ENCODE measurements at regions of chr3 and their contacts with region 1.

Region 1: DNA sequence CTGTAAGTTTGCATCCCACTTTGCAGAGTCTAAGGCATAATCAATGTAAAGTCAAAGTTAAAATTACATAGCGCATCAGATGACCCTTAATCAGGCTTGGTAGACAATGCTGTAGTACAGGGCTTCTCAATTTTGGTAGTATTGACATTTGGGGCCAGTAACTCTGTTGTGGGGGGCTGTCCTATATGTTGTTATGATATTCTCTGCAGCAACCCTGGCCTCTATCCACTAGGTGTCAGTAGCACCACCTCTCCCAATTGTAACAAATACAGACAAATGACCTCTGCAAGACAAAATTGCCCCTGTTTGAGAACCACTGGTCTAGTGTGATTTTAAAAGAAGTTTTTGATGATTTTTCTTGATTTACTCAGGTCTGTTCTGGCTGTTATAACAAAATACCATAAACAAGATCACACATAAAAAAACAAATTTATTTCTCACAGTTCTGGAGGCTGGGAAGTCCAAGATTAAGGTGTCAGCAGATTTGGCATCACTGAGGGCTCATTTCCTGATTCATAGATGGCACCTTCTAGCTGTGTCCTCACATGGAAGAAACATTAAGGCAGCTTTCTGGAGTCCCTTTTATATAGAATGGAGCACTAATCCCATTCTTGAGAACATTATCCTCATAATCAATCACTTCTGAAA is 37.6 kb upstream of the SLC9A9 start:
- DNase-seq: peak; percentile 18 to 48
- ATAC-seq: peak; percentile 81 to 93; a peak in 4 of 6 replicates
- H3K4me3 ChIP-seq: no peak overlapping the region
- H3K27ac ChIP-seq: no peak overlapping the region
- H3K4me1 ChIP-seq: no peaks in the 10 kb centered on the region
- CTCF ChIP-seq: peak; percentile 65
- EP300 ChIP-seq: no peak
- POLR2A ChIP-seq: no peak
- RAD21 ChIP-seq: peak; percentile 51 to 57; a peak in 4 of 5 replicates

Region 2: DNA sequence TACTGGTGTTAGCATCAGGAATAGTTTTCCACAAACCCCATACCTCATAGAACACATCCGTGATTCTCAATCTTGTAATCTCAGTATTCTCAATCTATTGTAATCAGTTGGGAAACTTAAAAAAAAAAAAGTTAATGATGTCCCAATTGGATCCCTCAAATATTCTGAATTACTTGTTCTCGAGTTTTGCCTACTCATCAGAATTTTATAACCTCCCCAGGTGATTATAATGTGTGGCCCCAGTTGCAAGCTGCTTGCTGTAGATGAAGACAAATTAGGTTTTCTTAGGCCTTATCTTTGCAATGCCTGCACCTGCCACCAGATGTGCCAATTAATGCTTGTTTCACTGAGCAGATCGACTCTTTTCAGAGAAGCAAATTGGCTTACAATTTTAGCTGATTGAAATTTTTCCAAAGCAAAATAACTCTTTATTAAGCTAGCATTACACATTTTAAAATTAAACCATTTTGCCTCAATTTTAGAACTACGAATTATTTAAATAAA is 66.7 kb after region 1 on chr3:
- CTCF ChIA-PET with region 1: interaction called, 10 read pairs
- POLR2A ChIA-PET with region 1: no interaction called
- DNase-seq: no peak
- ATAC-seq: no peak
- H3K4me3 ChIP-seq: no peak overlapping the region
- H3K27ac ChIP-seq: no peak overlapping the region
- H3K4me1 ChIP-seq: no peaks in the 10 kb centered on the region
- CTCF ChIP-seq: no peak
- EP300 ChIP-seq: no peak
- POLR2A ChIP-seq: no peak
- RAD21 ChIP-seq: no peak

Region 3: DNA sequence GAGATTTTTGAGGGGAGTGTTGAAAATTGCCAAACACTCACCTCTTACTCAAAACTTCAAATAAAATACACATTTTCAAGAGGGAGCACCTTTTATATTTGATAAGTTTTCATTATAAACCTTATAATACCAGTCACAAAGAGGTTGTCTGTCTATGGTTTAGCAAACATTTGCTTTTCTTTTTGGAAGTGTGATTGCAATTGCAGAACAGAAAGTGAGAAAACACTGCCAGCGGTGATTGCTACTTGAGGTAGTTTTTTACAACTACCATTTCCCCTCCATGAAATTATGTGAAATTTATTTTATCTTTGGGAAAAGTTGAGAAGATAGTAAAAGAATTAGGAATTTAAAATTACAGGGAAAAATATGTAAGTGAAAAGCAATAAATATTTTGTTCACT is 105.8 kb after region 1 on chr3:
- CTCF ChIA-PET with region 1: no interaction called
- POLR2A ChIA-PET with region 1: no interaction called
- DNase-seq: no peak
- ATAC-seq: no peak
- H3K4me3 ChIP-seq: no peak overlapping the region
- H3K27ac ChIP-seq: no peak overlapping the region
- H3K4me1 ChIP-seq: no peaks in the 10 kb centered on the region
- CTCF ChIP-seq: no peak
- EP300 ChIP-seq: no peak
- POLR2A ChIP-seq: no peak
- RAD21 ChIP-seq: no peak

Measured in A549 (cell line).